CD8-positive, alpha-beta T cell (primary cell): ENCODE measurements at regions of chr11 and their contacts with region 1.

Region 1: DNA sequence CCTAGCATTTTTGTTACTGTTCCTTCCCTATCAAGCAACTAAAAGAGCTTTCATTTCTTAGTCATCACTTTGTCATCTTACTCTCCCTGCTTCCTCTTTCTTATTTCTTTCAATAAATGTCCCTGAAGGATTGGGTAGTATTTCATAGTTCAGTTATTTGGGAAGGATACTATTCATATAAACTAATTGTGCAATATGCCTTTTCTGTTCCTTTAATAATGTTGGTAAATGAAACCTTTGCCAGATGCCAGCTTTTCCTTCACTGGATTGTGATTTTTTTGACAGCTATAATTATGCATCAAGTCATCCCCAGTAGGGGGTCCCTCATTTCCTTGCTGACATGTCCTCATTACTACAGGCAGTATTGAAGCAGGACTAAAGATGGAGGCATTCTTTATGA is 101.7 kb downstream of the ATM start:
- DNase-seq: no peak
- ATAC-seq: no peak
- H3K4me3 ChIP-seq: no peak overlapping the region
- H3K4me3 Mint-ChIP-seq: no peak overlapping the region
- H3K27ac ChIP-seq: no peak overlapping the region
- H3K27ac Mint-ChIP-seq: peak overlapping the region; percentile 33
- H3K4me1 ChIP-seq: no peaks in the 10 kb centered on the region
- H3K4me1 Mint-ChIP-seq: peaks cover 9% of the 10 kb centered on the region
- H3K27me3 ChIP-seq: no peaks in the 10 kb centered on the region
- H3K27me3 Mint-ChIP-seq: no peaks in the 10 kb centered on the region
- CTCF ChIP-seq: no peak

Region 2: GRCh38 chr11:108154591-108154990 is 170.0 kb before region 1 on chr11:
- CTCF ChIA-PET with region 1: no interaction called
- POLR2A ChIA-PET with region 1: no interaction called
- intact Hi-C with region 1: loop called in 1 of 2 experiments (anchors 10 kb)
- DNase-seq: no peak
- ATAC-seq: no peak
- H3K4me3 ChIP-seq: no peak overlapping the region
- H3K4me3 Mint-ChIP-seq: no peak overlapping the region
- H3K27ac ChIP-seq: no peak overlapping the region
- H3K27ac Mint-ChIP-seq: no peak overlapping the region
- H3K4me1 ChIP-seq: no peaks in the 10 kb centered on the region
- H3K4me1 Mint-ChIP-seq: peaks cover 5% of the 10 kb centered on the region
- H3K27me3 ChIP-seq: no peaks in the 10 kb centered on the region
- H3K27me3 Mint-ChIP-seq: no peaks in the 10 kb centered on the region
- CTCF ChIP-seq: no peak

Region 3: GRCh38 chr11:108278546-108278945 is 46.0 kb before region 1 on chr11:
- CTCF ChIA-PET with region 1: no interaction called
- POLR2A ChIA-PET with region 1: interaction called, 3 read pairs
- intact Hi-C with region 1: loop called (anchors 5 kb)
- DNase-seq: peak in 1 of 9 experiments; percentile 16
- ATAC-seq: no peak
- H3K4me3 ChIP-seq: no peak overlapping the region
- H3K4me3 Mint-ChIP-seq: no peak overlapping the region
- H3K27ac ChIP-seq: peak overlapping the region in 1 of 2 experiments; percentile 6
- H3K27ac Mint-ChIP-seq: peak overlapping the region; percentile 79
- H3K4me1 ChIP-seq: peaks cover 49% of the 10 kb centered on the region
- H3K4me1 Mint-ChIP-seq: peaks cover 68% of the 10 kb centered on the region
- H3K27me3 ChIP-seq: no peaks in the 10 kb centered on the region
- H3K27me3 Mint-ChIP-seq: no peaks in the 10 kb centered on the region
- CTCF ChIP-seq: no peak

Region 4: GRCh38 chr11:108289699-108290098 is 34.9 kb before region 1 on chr11:
- CTCF ChIA-PET with region 1: no interaction called
- POLR2A ChIA-PET with region 1: no interaction called
- intact Hi-C with region 1: loop called (anchors 5 kb)
- DNase-seq: no peak
- ATAC-seq: no peak
- H3K4me3 ChIP-seq: no peak overlapping the region
- H3K4me3 Mint-ChIP-seq: no peak overlapping the region
- H3K27ac ChIP-seq: peak overlapping the region in 1 of 2 experiments; percentile 20
- H3K27ac Mint-ChIP-seq: peak overlapping the region; percentile 81
- H3K4me1 ChIP-seq: peaks cover 28% of the 10 kb centered on the region
- H3K4me1 Mint-ChIP-seq: peaks cover 28% of the 10 kb centered on the region
- H3K27me3 ChIP-seq: no peaks in the 10 kb centered on the region
- H3K27me3 Mint-ChIP-seq: no peaks in the 10 kb centered on the region
- CTCF ChIP-seq: no peak

Region 5: DNA sequence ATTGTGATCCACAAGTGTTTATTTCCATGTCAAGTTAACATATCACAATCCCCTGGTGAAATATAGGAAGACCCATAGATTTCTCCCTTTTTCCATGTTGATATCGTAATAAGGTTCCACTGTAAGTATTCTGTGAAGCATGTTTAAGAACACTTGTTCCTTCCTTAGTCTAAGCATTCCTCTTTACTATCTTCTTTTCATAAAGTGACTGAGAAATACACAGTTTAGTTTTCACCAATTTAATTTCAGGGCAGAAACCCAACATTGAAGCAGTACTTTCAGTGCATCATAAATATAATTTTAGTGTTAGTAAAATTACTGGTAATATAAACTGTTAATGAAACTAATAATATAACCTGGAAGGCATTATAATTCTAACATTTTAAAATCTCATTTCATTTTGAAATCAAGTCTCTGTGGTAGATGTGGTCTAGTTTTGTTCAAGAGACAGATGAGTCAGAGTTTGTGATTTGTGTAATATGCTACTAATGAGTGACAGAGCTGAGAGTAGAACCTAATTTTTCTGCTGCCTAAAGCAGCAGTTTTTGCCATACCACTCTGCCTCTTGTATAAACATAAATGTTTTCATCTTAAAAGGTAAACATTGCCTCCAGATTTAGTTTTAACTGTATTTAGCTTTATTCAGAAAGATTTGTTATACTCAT is 22.3 kb before region 1 on chr11:
- CTCF ChIA-PET with region 1: no interaction called
- POLR2A ChIA-PET with region 1: no interaction called
- intact Hi-C with region 1: loop called in 1 of 2 experiments (anchors 2 kb)
- DNase-seq: no peak
- ATAC-seq: no peak
- H3K4me3 ChIP-seq: no peak overlapping the region
- H3K4me3 Mint-ChIP-seq: no peak overlapping the region
- H3K27ac ChIP-seq: no peak overlapping the region
- H3K27ac Mint-ChIP-seq: peak overlapping the region; percentile 50
- H3K4me1 ChIP-seq: no peaks in the 10 kb centered on the region
- H3K4me1 Mint-ChIP-seq: peaks cover 32% of the 10 kb centered on the region
- H3K27me3 ChIP-seq: no peaks in the 10 kb centered on the region
- H3K27me3 Mint-ChIP-seq: no peaks in the 10 kb centered on the region
- CTCF ChIP-seq: no peak

Region 6: DNA sequence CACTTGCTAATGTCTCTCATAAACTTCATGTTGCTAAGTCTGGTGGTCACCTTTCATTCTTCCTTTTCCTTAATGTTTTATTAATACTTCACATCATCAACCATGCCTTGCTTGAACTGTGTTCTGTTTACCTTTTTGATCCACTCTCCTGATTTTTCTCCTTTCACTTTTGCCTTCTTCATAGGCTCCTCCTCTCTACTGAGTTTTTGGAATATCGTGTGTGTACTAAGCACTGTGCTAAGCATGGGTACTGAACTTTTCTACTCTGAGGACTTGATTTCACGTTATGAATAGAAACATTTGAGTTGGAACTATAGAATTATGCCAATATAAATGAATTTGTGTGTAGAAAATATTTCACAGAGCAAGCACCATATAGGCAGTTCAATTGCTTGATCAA is 11.1 kb before region 1 on chr11:
- CTCF ChIA-PET with region 1: interaction called, 4 read pairs
- POLR2A ChIA-PET with region 1: no interaction called
- intact Hi-C with region 1: loop called in 1 of 2 experiments (anchors 2 kb)
- DNase-seq: no peak
- ATAC-seq: no peak
- H3K4me3 ChIP-seq: no peak overlapping the region
- H3K4me3 Mint-ChIP-seq: no peak overlapping the region
- H3K27ac ChIP-seq: no peak overlapping the region
- H3K27ac Mint-ChIP-seq: peak overlapping the region; percentile 80
- H3K4me1 ChIP-seq: no peaks in the 10 kb centered on the region
- H3K4me1 Mint-ChIP-seq: peaks cover 30% of the 10 kb centered on the region
- H3K27me3 ChIP-seq: no peaks in the 10 kb centered on the region
- H3K27me3 Mint-ChIP-seq: no peaks in the 10 kb centered on the region
- CTCF ChIP-seq: no peak

Region 7: DNA sequence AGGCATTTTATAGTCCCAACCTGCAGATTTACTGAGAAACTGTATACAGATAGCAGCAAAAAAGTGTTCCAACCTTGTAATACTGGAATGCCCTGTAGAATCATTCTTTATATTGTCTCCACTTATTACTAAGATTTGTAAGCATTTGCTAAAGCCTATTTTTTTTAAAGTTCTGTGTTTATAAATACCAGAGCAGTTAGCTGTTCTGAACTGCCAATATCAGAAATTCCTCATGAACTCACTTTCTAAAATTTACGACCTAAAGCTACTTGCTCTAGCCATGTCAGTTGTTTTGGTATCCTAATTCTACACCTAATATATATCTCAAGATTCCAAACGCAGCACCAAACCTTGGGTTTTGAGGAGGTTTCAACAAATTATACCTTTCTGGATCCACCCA is 39.6 kb after region 1 on chr11:
- CTCF ChIA-PET with region 1: no interaction called
- POLR2A ChIA-PET with region 1: no interaction called
- intact Hi-C with region 1: no loop called
- DNase-seq: no peak
- ATAC-seq: no peak
- H3K4me3 ChIP-seq: no peak overlapping the region
- H3K4me3 Mint-ChIP-seq: no peak overlapping the region
- H3K27ac ChIP-seq: no peak overlapping the region
- H3K27ac Mint-ChIP-seq: no peak overlapping the region
- H3K4me1 ChIP-seq: no peaks in the 10 kb centered on the region
- H3K4me1 Mint-ChIP-seq: no peaks in the 10 kb centered on the region
- H3K27me3 ChIP-seq: no peaks in the 10 kb centered on the region
- H3K27me3 Mint-ChIP-seq: no peaks in the 10 kb centered on the region
- CTCF ChIP-seq: no peak